ENCODE measurements at regions of chr16 and their contacts with region 1.

Region 1: GRCh38 chr16:3950343-3951193 is 70.1 kb upstream of the CREBBP start:
- DNase-seq: no peak
- ATAC-seq: no peak
- H3K4me3 ChIP-seq: no peak overlapping the region
- H3K4me3 Mint-ChIP-seq: no peak overlapping the region
- H3K27ac ChIP-seq: no peak overlapping the region
- H3K27ac Mint-ChIP-seq: peak overlapping the region in 1 of 2 donors; percentile 9
- H3K4me1 ChIP-seq: peaks cover 0 to 2% of the 10 kb centered on the region in 2 experiments
- H3K4me1 Mint-ChIP-seq: no peaks in the 10 kb centered on the region
- H3K27me3 ChIP-seq: peaks cover 0 to 33% of the 10 kb centered on the region in 2 experiments
- H3K27me3 Mint-ChIP-seq: peaks cover 26 to 29% of the 10 kb centered on the region in 2 donors

Region 2: DNA sequence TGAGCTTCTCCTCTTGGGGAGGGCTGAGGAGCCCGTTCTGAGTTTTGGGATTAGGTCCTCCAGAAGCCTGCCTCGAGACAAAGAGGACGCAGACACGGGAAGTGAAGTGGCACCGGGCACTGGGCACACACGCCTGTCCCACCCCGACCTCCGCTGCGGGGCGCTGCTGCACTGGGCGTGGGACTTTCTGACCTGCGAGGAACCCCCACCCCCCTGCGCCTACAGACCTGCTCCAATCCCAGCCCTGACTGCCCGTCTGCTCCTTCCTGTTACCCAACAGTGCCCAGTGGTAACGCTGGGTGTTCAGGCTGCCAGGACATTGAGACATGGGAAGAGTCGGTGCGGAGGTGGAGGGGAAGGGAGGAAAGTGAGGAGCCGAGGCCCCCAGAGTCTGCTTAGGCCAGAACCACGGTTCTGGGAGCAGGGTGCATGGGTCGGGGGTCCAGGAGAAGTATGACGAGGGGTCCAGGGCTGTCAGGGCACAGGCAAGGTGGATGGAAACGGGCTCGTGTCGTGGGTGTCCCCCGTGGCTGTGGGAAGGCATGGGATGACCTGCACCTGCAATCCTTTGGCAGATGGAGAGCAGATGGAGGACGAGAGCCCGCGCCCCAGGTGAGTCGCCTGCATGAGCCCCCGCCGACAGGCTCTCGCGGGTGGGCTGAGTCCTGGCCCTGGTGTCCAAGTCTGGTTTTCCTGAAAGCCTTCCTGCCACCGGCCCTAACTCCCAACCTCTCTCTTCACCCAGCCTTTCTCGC is 41.9 kb after region 1 on chr16:
- CTCF ChIA-PET with region 1: no interaction called
- POLR2A ChIA-PET with region 1: interaction called in 1 of 2 experiments, 12 read pairs
- DNase-seq: peak in 1 of 35 experiments; percentile 5
- ATAC-seq: no peak
- H3K4me3 ChIP-seq: no peak overlapping the region
- H3K4me3 Mint-ChIP-seq: no peak overlapping the region
- H3K27ac ChIP-seq: no peak overlapping the region
- H3K27ac Mint-ChIP-seq: no peak overlapping the region
- H3K4me1 ChIP-seq: no peaks in the 10 kb centered on the region
- H3K4me1 Mint-ChIP-seq: no peaks in the 10 kb centered on the region
- H3K27me3 ChIP-seq: no peaks in the 10 kb centered on the region
- H3K27me3 Mint-ChIP-seq: no peaks in the 10 kb centered on the region

Region 3: GRCh38 chr16:4123616-4124265 is 173.2 kb after region 1 on chr16:
- CTCF ChIA-PET with region 1: no interaction called
- POLR2A ChIA-PET with region 1: no interaction called
- DNase-seq: no peak
- ATAC-seq: no peak
- H3K4me3 ChIP-seq: no peak overlapping the region
- H3K4me3 Mint-ChIP-seq: no peak overlapping the region
- H3K27ac ChIP-seq: no peak overlapping the region
- H3K27ac Mint-ChIP-seq: no peak overlapping the region
- H3K4me1 ChIP-seq: no peaks in the 10 kb centered on the region
- H3K4me1 Mint-ChIP-seq: no peaks in the 10 kb centered on the region
- H3K27me3 ChIP-seq: peaks cover 0 to 21% of the 10 kb centered on the region in 2 experiments
- H3K27me3 Mint-ChIP-seq: peaks cover 3 to 9% of the 10 kb centered on the region in 2 donors

Measured in T-cell (primary cell).